Endothelial cell of umbilical vein (primary cell): ENCODE measurements at regions of chr2 and their contacts with region 1.

Region 1: DNA sequence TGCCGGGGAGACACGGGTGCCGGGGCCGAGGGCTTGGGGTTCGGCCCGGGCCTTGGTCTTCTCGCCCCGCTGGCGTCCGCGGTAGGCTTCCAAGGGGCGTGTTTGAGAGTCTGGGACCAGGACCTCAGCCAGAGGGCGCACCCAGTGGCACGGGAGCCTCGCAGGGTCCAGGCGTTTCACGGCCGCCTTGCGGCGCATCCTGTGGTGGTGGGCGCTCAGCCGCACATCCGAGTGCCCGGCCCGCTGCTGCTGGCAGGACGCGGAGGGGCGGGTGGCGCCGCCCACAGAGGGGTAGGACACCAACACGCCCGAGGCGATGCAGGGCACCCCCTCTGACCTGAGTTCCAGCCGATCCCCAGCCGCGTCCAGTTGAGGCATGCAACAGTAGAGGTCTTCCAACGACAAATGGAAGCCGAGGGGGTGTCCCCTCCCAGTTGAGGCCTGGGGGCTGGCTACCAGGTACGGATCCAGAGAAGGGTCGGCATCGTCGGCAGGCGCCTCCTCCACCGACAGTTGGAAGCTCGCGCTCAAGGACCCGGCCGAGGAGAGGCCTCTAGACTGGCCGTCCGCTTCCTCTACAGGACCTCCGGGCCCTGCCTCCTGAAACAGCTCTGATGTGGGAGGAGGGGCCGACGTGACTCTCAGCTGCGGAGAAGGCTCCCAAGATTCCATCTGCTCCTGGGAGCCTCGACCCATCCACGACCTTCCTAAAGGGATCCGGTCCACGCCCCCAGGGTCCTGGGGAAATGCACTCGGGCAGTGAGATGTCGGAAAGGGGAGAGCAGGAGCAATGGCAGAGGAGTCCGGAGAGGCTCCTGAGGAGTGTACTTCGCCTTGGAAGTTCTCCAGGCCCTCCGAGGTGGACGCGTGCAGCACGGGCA is 6.3 kb downstream of the C2orf81 start:
- DNase-seq: peak; percentile 10
- H3K4me3 ChIP-seq: peak overlapping the region in 2 of 3 experiments; percentile 12 to 20
- H3K27ac ChIP-seq: no peak overlapping the region
- H3K4me1 ChIP-seq: peaks cover 6% of the 10 kb centered on the region
- H3K27me3 ChIP-seq: peaks cover 29 to 35% of the 10 kb centered on the region in 2 experiments
- CTCF ChIP-seq: peak in 1 of 2 donors; percentile 27
- POLR2A ChIP-seq: no peak

Region 2: GRCh38 chr2:73588177-73588576 is 826.9 kb before region 1 on chr2:
- CTCF ChIA-PET with region 1: no interaction called
- POLR2A ChIA-PET with region 1: no interaction called
- dilution Hi-C with region 1: no loop called
- intact Hi-C with region 1: no loop called
- DNase-seq: no peak
- H3K4me3 ChIP-seq: no peak overlapping the region
- H3K27ac ChIP-seq: no peak overlapping the region
- H3K4me1 ChIP-seq: no peaks in the 10 kb centered on the region
- H3K27me3 ChIP-seq: no peaks in the 10 kb centered on the region
- CTCF ChIP-seq: no peak
- POLR2A ChIP-seq: no peak

Region 3: GRCh38 chr2:74001781-74002486 is 413.2 kb before region 1 on chr2:
- CTCF ChIA-PET with region 1: no interaction called
- POLR2A ChIA-PET with region 1: no interaction called
- dilution Hi-C with region 1: no loop called
- intact Hi-C with region 1: no loop called
- DNase-seq: no peak
- H3K4me3 ChIP-seq: peak overlapping the region in 2 of 3 experiments; percentile 34 to 45
- H3K27ac ChIP-seq: no peak overlapping the region
- H3K4me1 ChIP-seq: peaks cover 9% of the 10 kb centered on the region
- H3K27me3 ChIP-seq: no peaks in the 10 kb centered on the region
- CTCF ChIP-seq: no peak
- POLR2A ChIP-seq: no peak

Region 4: DNA sequence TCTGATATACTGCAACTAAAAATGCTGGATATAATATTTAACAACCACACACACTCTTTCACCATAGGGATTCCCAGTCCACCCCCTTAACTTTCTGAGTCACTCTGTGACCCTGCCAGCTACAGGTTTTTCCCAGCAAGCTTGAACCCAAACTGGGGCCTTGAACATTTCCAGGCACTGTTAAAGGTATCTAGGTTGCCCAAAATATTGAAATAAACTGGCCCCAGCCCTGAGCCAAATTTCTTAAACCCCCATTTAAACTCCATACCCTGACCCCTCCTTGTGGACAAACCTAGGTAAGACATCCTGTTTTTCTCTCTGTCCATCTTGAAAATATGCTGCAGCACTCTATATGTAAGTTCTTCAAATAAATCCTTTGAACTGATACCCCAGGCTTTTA is 15.3 kb before region 1 on chr2:
- CTCF ChIA-PET with region 1: no interaction called
- POLR2A ChIA-PET with region 1: no interaction called
- dilution Hi-C with region 1: no loop called
- intact Hi-C with region 1: loop called (anchors 1 kb)
- DNase-seq: peak; percentile 41
- H3K4me3 ChIP-seq: no peak overlapping the region
- H3K27ac ChIP-seq: no peak overlapping the region
- H3K4me1 ChIP-seq: no peaks in the 10 kb centered on the region
- H3K27me3 ChIP-seq: peaks cover 0 to 2% of the 10 kb centered on the region in 2 experiments
- CTCF ChIP-seq: peak; percentile 42 to 53
- POLR2A ChIP-seq: no peak